ENCODE measurements at regions of chr9 and their contacts with region 1.

Region 1: DNA sequence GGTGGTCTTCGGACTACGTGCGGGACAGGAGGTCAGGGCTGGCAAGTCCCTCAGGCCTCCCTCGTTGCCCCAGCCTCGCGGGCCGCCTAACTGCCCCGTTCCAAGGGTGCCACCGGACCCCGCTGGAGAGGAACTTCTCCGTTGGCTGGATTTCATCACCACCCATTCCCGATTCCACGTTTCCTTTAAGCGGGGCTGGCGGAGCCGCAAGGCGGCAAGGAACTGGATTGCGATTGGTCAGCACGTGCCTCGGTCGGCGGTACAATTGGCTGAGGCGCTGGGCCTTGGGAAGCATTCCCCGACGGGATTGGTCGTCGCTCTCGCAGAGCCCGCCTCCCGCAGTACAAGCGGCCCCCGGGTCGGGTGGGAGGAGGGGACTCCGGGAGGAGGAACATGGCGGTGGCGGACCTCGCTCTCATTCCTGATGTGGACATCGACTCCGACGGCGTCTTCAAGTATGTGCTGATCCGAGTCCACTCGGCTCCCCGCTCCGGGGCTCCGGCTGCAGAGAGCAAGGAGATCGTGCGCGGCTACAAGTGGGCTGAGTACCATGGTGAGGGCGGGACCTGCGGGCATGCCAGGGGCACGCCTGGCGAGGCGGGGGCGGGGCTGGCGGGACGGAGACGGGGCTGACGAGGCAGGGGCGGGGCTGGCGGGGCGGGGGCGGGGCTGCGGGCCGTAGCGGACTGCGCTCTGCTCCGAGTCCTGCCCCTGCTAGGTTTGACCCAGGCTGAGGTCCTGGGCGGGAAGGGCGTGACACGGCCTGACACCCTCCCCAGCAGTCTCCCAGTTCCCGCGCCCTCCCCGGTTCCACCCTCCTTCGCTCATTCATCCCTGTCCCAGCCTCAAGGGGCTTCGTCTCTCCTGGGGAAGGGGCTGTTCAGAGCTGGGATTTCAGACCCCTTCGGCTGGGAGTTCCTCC is at the start of gene PHPT1:
- DNase-seq: peak; percentile 98
- ATAC-seq: peak; percentile 91
- H3K4me3 Mint-ChIP-seq: peak within 1 kb of the TSS; percentile 93
- H3K27ac Mint-ChIP-seq: peak within 1 kb of the TSS; percentile 88
- H3K4me1 Mint-ChIP-seq: peaks cover 8% of the 10 kb centered on the region
- H3K27me3 Mint-ChIP-seq: peaks cover 12% of the 10 kb centered on the region
- total RNA-seq, gene PHPT1: 94.5 to 98.9 TPM

Region 2: DNA sequence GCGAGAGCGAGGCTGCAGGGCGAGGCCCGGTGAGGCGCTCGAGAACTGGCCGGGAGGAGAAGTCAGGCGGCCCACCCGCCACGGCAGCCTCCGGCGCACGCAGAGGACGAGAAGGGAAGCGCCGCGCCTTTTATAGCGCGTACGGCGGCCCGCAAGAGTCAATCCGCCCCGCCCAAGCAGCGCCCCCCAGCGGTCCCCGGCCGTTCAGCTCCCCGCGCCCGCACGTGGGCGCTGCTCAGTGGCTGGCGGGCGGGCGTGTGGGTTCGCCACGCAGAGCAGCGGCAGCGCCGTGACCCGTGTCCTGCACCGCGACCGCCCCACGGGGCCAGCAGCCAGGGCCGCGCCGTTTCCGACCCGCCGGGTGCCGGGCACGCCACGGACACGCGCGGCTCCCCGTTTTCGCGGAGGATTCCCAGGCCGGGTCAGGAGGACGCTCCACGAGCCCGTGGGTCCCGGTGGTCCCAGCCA is 121.2 kb before region 1 on chr9:
- CTCF ChIA-PET with region 1: interaction called, 3 read pairs
- POLR2A ChIA-PET with region 1: no interaction called
- intact Hi-C with region 1: loop called in 1 of 2 experiments (anchors 1 kb)
- DNase-seq: peak; percentile 95
- ATAC-seq: peak; percentile 72
- H3K4me3 Mint-ChIP-seq: peak overlapping the region; percentile 100
- H3K27ac Mint-ChIP-seq: no peak overlapping the region
- H3K4me1 Mint-ChIP-seq: peaks cover 39% of the 10 kb centered on the region
- H3K27me3 Mint-ChIP-seq: no peaks in the 10 kb centered on the region

Region 3: DNA sequence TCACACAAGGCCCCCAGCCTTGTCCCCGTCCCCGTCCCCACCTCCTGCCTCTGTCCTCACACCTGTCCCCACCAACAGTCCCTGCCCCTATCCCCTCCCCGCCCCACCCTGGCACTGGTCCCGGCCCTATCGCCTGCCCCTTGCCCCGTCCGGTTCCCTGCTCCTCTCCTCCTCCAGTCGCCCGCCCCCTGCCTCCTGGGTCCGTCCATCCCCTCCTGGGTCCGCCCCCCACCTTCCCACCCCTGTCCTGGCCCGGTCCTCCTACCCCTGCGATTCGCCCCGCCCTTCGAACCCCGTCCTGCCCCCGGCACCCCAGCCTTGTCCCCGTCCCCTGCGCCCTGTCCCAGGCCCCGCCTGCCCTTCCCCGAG is 16.4 kb after region 1 on chr9:
- CTCF ChIA-PET with region 1: interaction called, 3 read pairs
- POLR2A ChIA-PET with region 1: no interaction called
- intact Hi-C with region 1: loop called in 1 of 2 experiments (anchors 1 kb)
- DNase-seq: no peak
- ATAC-seq: no peak
- H3K4me3 Mint-ChIP-seq: peak overlapping the region; percentile 81
- H3K27ac Mint-ChIP-seq: peak overlapping the region; percentile 38
- H3K4me1 Mint-ChIP-seq: peaks cover 16% of the 10 kb centered on the region
- H3K27me3 Mint-ChIP-seq: no peaks in the 10 kb centered on the region

Region 4: GRCh38 chr9:136949817-136950655 is 100.7 kb after region 1 on chr9:
- CTCF ChIA-PET with region 1: interaction called, 3 read pairs
- POLR2A ChIA-PET with region 1: no interaction called
- intact Hi-C with region 1: loop called in 1 of 2 experiments (anchors 1 kb)
- DNase-seq: peak; percentile 98
- ATAC-seq: peak; percentile 98
- H3K4me3 Mint-ChIP-seq: peak overlapping the region; percentile 78
- H3K27ac Mint-ChIP-seq: peak overlapping the region; percentile 78
- H3K4me1 Mint-ChIP-seq: peaks cover 2% of the 10 kb centered on the region
- H3K27me3 Mint-ChIP-seq: no peaks in the 10 kb centered on the region

Region 5: GRCh38 chr9:137029058-137029936 is 180.0 kb after region 1 on chr9:
- CTCF ChIA-PET with region 1: interaction called, 8 read pairs
- POLR2A ChIA-PET with region 1: no interaction called
- intact Hi-C with region 1: loop called (anchors 1 to 10 kb)
- DNase-seq: peak; percentile 88
- ATAC-seq: peak; percentile 52
- H3K4me3 Mint-ChIP-seq: peak overlapping the region; percentile 60
- H3K27ac Mint-ChIP-seq: peak overlapping the region; percentile 42
- H3K4me1 Mint-ChIP-seq: peaks cover 46% of the 10 kb centered on the region
- H3K27me3 Mint-ChIP-seq: no peaks in the 10 kb centered on the region

Region 6: GRCh38 chr9:137086531-137087408 is 237.5 kb after region 1 on chr9 and contains the start of gene MAN1B1:
- CTCF ChIA-PET with region 1: no interaction called
- POLR2A ChIA-PET with region 1: no interaction called
- intact Hi-C with region 1: loop called in 1 of 2 experiments (anchors 1 kb)
- DNase-seq: peak; percentile 100
- ATAC-seq: peak; percentile 85
- H3K4me3 Mint-ChIP-seq: peak within 1 kb of the TSS; percentile 88
- H3K27ac Mint-ChIP-seq: peak within 1 kb of the TSS; percentile 96
- H3K4me1 Mint-ChIP-seq: peaks cover 46% of the 10 kb centered on the region
- H3K27me3 Mint-ChIP-seq: no peaks in the 10 kb centered on the region
- total RNA-seq, gene MAN1B1: 21.6 to 26.7 TPM

Region 7: DNA sequence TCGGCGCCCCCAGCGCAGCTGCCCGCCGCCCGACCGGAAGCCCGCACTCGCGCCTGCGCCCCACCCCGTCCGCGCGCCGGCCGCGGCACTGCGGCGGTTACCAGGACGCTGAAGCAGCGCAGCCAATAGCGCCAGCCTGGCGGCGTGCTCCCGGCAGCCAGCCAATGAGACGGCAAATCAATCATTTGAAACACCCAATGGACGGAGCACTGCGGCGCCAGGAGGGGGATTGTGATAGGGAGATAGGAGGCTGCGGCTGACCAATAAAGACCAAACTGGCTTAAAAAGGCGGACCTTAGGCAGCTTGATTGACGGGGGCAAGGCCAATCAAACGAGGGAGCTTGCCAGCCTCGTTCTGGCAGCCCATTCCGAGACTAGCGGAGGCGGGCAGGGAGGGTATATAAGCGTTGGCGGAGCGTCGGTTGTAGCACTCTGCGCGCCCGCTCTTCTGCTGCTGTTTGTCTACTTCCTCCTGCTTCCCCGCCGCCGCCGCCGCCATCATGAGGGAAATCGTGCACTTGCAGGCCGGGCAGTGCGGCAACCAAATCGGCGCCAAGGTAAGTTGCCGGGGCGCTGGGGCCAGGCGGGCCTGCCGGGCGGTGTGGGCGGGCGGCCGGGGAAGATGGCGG is 391.7 kb after region 1 on chr9 and contains the start of gene TUBB4B:
- CTCF ChIA-PET with region 1: no interaction called
- POLR2A ChIA-PET with region 1: no interaction called
- intact Hi-C with region 1: loop called in 1 of 2 experiments (anchors 1 kb)
- DNase-seq: peak; percentile 98
- ATAC-seq: peak; percentile 84
- H3K4me3 Mint-ChIP-seq: peak within 1 kb of the TSS; percentile 83
- H3K27ac Mint-ChIP-seq: peak within 1 kb of the TSS; percentile 87
- H3K4me1 Mint-ChIP-seq: peaks cover 27% of the 10 kb centered on the region
- H3K27me3 Mint-ChIP-seq: no peaks in the 10 kb centered on the region
- total RNA-seq, gene TUBB4B: 264 to 278 TPM